ENCODE measurements at regions of chr18 and their contacts with region 1.

Region 1: GRCh38 chr18:31042437-31043181 is at the start of gene DSC3:
- DNase-seq: peak; percentile 61
- ATAC-seq: peak; percentile 51
- H3K4me3 ChIP-seq: peak within 1 kb of the TSS; percentile 77
- H3K27ac ChIP-seq: peak within 1 kb of the TSS; percentile 63
- H3K4me1 ChIP-seq: peaks cover 40% of the 10 kb centered on the region
- H3K27me3 ChIP-seq: no peaks in the 10 kb centered on the region
- CTCF ChIP-seq: no peak
- total RNA-seq, gene DSC3: 11.1 and 14.6 TPM in 2 replicates

Region 2: DNA sequence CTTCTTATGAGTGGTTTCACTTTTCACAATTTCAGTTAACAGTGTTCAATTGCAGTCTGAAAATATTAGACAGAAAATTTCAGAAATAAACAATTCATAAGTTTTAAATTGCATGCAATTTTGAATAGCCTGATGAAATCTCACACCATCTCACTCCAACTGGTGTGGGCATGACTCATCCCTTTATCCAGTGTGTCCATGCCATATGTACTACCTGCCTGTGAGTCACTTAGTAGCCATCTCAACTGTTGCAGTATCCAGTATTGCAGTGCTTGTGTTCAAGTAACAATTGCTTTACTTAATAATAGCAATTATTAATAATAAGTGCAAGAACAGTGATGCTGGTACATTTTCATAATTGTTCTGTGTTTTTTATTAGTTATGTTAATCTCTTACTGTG is 1202.5 kb before region 1 on chr18:
- CTCF ChIA-PET with region 1: no interaction called
- POLR2A ChIA-PET with region 1: no interaction called
- intact Hi-C with region 1: no loop called
- DNase-seq: peak; percentile 79
- ATAC-seq: peak; percentile 93
- H3K4me3 ChIP-seq: no peak overlapping the region
- H3K27ac ChIP-seq: no peak overlapping the region
- H3K4me1 ChIP-seq: peaks cover 33% of the 10 kb centered on the region
- H3K27me3 ChIP-seq: no peaks in the 10 kb centered on the region
- CTCF ChIP-seq: no peak

Region 3: GRCh38 chr18:31185186-31185950 is 142.8 kb after region 1 on chr18:
- CTCF ChIA-PET with region 1: no interaction called
- POLR2A ChIA-PET with region 1: no interaction called
- intact Hi-C with region 1: loop called (anchors 5 kb)
- DNase-seq: peak; percentile 82
- ATAC-seq: peak; percentile 99
- H3K4me3 ChIP-seq: no peak overlapping the region
- H3K27ac ChIP-seq: peak overlapping the region; percentile 80
- H3K4me1 ChIP-seq: peaks cover 14% of the 10 kb centered on the region
- H3K27me3 ChIP-seq: no peaks in the 10 kb centered on the region
- CTCF ChIP-seq: no peak

Region 4: DNA sequence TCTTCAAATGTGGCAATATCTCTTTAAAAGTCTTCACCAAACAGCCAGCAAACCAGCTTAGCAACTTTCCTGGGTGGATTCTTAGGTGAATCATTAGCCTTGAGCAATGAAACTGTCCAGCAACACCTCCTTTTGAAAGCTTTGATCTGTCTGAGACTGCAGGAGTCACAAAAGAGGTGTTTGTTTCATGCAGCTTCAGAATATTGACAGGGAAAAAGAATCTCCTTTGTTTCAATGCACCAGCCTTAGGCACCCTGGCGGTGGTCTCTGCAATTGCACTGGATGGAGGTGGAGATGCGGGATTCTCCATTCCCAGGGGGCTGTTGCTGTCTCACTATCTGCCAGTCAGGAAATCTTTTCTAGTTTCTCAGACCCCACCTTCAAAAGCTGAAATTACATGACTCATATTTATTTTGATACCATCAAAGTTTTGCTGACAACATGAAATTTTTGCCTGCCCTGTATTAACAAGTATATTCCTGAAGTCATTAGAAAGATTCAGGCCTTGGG is 199.3 kb after region 1 on chr18:
- CTCF ChIA-PET with region 1: no interaction called
- POLR2A ChIA-PET with region 1: interaction called, 5 read pairs
- intact Hi-C with region 1: loop called (anchors 1 kb)
- DNase-seq: peak; percentile 85
- ATAC-seq: peak; percentile 93
- H3K4me3 ChIP-seq: peak overlapping the region; percentile 44; the same call in 1 of the 2 replicates
- H3K27ac ChIP-seq: peak overlapping the region; percentile 90
- H3K4me1 ChIP-seq: peaks cover 35% of the 10 kb centered on the region
- H3K27me3 ChIP-seq: no peaks in the 10 kb centered on the region
- CTCF ChIP-seq: peak; percentile 64; the same call in 1 of the 2 replicates

Measured in PC-3 (cell line).